ENCODE measurements at regions of chr19 and their contacts with region 1.

Region 1: DNA sequence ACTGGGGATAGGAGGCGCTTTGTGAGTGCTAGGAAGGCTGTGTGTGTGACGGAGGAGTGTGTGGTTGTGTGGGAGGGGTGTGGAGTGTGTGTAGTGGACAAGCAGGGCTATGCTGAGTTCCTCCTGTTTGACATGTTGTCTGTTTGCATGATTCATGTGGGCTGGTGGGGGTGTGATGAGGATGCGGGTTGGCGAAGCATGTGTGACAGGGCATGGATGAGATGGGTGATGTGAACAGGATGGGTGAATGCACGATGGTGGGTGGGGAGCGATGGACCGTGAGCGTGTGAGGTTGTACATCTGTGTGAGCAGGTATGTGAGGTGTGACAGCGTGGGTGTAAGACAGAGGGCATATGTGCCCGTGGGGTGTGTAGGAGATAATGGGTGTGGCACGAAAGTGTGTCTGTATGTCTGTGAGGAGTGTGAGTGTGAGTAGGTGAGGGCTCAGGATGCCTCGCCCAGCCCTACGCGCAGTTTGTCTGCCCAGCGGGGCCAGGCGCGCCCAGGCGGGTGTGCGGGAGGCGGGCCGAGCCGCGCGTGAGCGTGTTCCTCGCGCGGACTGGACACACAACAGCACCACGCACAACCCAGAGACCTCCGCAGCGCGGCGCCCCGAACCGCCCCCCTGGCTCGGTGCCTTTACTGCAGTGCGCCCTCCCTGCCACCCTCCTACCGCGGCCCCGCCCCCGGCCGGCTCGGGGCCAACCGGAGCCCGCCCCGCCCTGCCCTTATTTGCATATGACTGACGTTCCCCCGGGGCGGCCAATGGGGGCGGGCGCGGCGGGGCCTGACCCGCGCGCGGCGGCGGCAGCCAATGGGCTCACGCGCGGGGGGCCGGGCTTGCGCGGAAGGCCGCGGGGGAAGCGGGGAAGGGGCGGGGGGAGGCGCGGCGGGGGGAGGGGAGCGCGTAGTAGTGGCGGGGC is 14.4 kb downstream of the CIC start:
- DNase-seq: peak; percentile 96
- H3K4me3 Mint-ChIP-seq: no peak overlapping the region
- H3K27ac Mint-ChIP-seq: no peak overlapping the region
- H3K4me1 Mint-ChIP-seq: peaks cover 27% of the 10 kb centered on the region
- H3K27me3 Mint-ChIP-seq: no peaks in the 10 kb centered on the region
- CTCF ChIP-seq: no peak

Region 2: GRCh38 chr19:42219812-42220750 is 63.3 kb before region 1 on chr19 and contains the start of gene ZNF526:
- CTCF ChIA-PET with region 1: interaction called, 4 read pairs
- POLR2A ChIA-PET with region 1: interaction called, 10 read pairs
- intact Hi-C with region 1: no loop called
- DNase-seq: peak; percentile 98
- H3K4me3 Mint-ChIP-seq: peak within 1 kb of the TSS; percentile 91
- H3K27ac Mint-ChIP-seq: peak within 1 kb of the TSS; percentile 86
- H3K4me1 Mint-ChIP-seq: peaks cover 24% of the 10 kb centered on the region
- H3K27me3 Mint-ChIP-seq: no peaks in the 10 kb centered on the region
- CTCF ChIP-seq: no peak
- total RNA-seq, gene ZNF526: 11.5 and 12.3 TPM in 2 replicates

Region 3: GRCh38 chr19:42254989-42255765 is 28.2 kb before region 1 on chr19 and contains the start of gene ERF:
- CTCF ChIA-PET with region 1: interaction called, 33 read pairs
- POLR2A ChIA-PET with region 1: interaction called, 21 read pairs
- intact Hi-C with region 1: no loop called
- DNase-seq: peak; percentile 94
- H3K4me3 Mint-ChIP-seq: peak within 1 kb of the TSS; percentile 85
- H3K27ac Mint-ChIP-seq: peak within 1 kb of the TSS; percentile 35
- H3K4me1 Mint-ChIP-seq: peaks cover 22% of the 10 kb centered on the region
- H3K27me3 Mint-ChIP-seq: no peaks in the 10 kb centered on the region
- CTCF ChIP-seq: no peak
- total RNA-seq, gene ERF: 27.8 and 35.1 TPM in 2 replicates

Region 4: DNA sequence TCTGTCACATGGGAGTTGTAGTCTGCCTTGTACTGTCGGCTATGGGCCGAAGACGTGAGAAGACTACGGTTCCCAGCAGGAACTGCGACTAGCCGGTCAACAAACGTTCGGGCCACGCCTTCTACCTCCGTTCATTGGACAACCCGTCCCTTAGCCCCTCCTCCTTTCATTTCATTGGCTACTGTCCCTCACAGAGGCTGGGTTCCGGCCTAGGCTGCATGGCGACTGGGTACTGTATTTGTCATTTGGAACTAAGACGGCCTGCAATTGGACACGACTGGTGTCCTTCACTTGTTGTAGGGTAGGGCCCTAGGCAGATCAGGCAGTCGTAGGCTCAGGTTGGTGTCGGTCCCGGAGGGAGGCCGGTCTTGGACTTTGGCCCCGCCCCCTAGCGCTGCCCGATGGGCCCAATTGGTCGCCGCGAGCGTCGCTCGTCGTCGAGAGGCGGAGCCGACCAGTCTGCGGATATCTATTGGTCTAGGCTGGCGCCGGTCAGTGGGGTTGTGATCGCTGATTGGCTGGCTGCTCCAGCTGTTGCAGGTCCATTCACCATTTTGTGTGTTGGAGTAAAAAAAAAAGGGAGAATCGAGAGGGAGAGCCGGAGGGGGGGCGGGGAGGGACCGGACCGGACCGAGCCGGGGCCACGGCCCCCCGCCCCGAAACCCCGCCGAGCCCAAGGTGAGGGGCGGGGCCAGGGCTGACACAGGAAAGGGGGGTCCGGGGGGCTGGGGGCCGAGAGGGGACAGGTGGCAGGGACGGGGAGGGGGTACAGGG is 14.5 kb before region 1 on chr19 and contains the start of gene CIC:
- CTCF ChIA-PET with region 1: interaction called, 20 read pairs
- POLR2A ChIA-PET with region 1: interaction called, 66 read pairs
- intact Hi-C with region 1: loop called (anchors 1 kb)
- DNase-seq: peak; percentile 100
- H3K4me3 Mint-ChIP-seq: no peak within 1 kb of the TSS
- H3K27ac Mint-ChIP-seq: no peak within 1 kb of the TSS
- H3K4me1 Mint-ChIP-seq: peaks cover 23% of the 10 kb centered on the region
- H3K27me3 Mint-ChIP-seq: no peaks in the 10 kb centered on the region
- CTCF ChIP-seq: no peak
- total RNA-seq, gene CIC: 66.9 and 67.9 TPM in 2 replicates

Region 5: GRCh38 chr19:42295831-42296525 is 12.6 kb after region 1 on chr19:
- CTCF ChIA-PET with region 1: interaction called, 15 read pairs
- POLR2A ChIA-PET with region 1: interaction called, 10 read pairs
- intact Hi-C with region 1: no loop called
- DNase-seq: peak; percentile 76
- H3K4me3 Mint-ChIP-seq: no peak overlapping the region
- H3K27ac Mint-ChIP-seq: no peak overlapping the region
- H3K4me1 Mint-ChIP-seq: peaks cover 6% of the 10 kb centered on the region
- H3K27me3 Mint-ChIP-seq: no peaks in the 10 kb centered on the region
- CTCF ChIP-seq: peak; percentile 93

Region 6: DNA sequence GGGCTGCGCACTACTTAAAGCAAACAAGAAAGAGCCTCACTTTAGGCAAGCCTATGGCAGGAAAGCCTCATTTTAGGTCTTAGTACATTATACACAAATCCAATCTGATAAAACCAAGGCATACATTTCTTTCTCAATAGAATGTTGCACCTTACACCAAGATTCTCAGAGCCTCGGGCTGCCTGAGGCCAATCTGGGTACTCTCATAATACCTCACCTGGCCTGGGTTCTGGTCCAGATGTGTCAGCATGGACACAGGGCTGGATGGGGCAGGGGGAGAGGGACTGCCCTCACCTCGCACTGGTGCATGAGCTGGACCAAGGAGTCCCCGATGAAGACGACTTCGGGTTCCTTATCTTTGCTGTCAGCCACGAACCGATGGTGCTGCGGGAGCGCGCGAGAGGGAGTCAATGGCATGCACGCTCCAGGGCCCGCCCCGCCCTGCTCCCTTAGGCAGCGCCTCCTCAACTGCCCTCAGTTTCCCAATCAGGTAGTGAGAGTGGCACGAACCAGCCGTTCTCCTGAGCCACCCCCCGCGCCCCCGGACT is 18.3 kb after region 1 on chr19 and contains the start of gene PRR19:
- CTCF ChIA-PET with region 1: interaction called, 15 read pairs
- POLR2A ChIA-PET with region 1: interaction called, 10 read pairs
- intact Hi-C with region 1: no loop called
- DNase-seq: no peak
- H3K4me3 Mint-ChIP-seq: peak within 1 kb of the TSS; percentile 90
- H3K27ac Mint-ChIP-seq: peak within 1 kb of the TSS; percentile 57
- H3K4me1 Mint-ChIP-seq: peaks cover 11% of the 10 kb centered on the region
- H3K27me3 Mint-ChIP-seq: no peaks in the 10 kb centered on the region
- CTCF ChIP-seq: no peak
- total RNA-seq, gene PRR19: 0.30 and 0.64 TPM in 2 replicates

Measured in MCF 10A (cell line).